ENCODE measurements at regions of chr6 and their contacts with region 1.

Region 1: DNA sequence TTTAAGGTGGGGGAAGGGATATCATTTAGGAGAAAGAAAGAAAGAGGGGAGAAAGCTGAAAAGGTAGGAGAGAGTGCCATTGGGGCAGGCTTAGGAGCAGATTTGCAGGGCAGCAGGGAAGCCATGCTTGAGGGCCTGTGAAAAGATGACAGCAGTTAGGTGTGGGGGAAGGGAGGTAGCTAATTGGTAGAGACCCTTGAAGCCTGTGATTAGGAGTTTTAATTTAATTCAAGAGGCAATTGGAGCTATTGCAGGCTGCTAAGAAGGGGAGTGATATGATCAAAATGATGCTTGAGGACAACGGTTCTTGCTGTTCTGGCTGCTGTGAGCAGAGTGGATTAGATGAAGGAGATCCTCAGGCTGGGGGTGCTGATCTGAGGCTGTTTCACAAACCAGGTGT is 24.5 kb upstream of the SEC63 start:
- DNase-seq: no peak
- ATAC-seq: no peak
- H3K4me3 ChIP-seq: no peak overlapping the region
- H3K27ac ChIP-seq: no peak overlapping the region
- H3K4me1 ChIP-seq: peaks cover 3% of the 10 kb centered on the region
- H3K27me3 ChIP-seq: no peaks in the 10 kb centered on the region
- CTCF ChIP-seq: no peak
- POLR2A ChIP-seq: no peak

Region 2: GRCh38 chr6:108027594-108027993 is 45.1 kb after region 1 on chr6:
- intact Hi-C with region 1: no loop called
- DNase-seq: peak; percentile 31 to 63 (median 50)
- ATAC-seq: no peak
- H3K4me3 ChIP-seq: no peak overlapping the region
- H3K27ac ChIP-seq: no peak overlapping the region
- H3K4me1 ChIP-seq: peaks cover 11% of the 10 kb centered on the region
- H3K27me3 ChIP-seq: no peaks in the 10 kb centered on the region
- CTCF ChIP-seq: no peak
- POLR2A ChIP-seq: no peak

Region 3: GRCh38 chr6:108052706-108053105 is 70.2 kb after region 1 on chr6:
- intact Hi-C with region 1: loop called (anchors 5 kb)
- DNase-seq: no peak
- ATAC-seq: no peak
- H3K4me3 ChIP-seq: no peak overlapping the region
- H3K27ac ChIP-seq: no peak overlapping the region
- H3K4me1 ChIP-seq: no peaks in the 10 kb centered on the region
- H3K27me3 ChIP-seq: no peaks in the 10 kb centered on the region
- CTCF ChIP-seq: no peak
- POLR2A ChIP-seq: no peak

Measured in body of pancreas (tissue), 4 donors.